Body of pancreas (tissue), 4 donors: ENCODE measurements at regions of chr16 and their contacts with region 1.

Region 1: DNA sequence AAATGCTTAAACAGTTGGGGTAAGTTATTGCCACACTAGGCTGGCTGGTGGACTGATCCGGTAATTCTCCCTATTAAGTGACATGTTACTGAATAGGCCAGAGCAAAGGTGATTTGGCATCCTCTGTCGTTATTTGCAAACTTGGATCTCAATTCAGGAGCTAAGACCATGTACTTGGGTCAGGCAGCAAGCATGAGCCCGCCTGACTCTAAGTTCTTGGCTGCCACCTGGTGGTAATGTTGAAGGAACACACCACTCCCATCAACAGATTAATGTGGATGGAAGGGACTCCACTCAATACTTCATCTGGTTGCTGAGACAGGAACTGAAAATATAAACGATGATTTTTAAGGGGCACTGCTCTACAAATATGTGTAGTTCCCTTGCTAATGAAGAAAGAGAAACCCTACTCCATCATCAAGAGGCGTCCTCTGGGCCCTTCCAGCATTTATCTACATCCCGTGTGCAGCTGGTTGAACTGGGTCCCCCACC is 70.8 kb downstream of the EMP2 start:
- DNase-seq: peak; percentile 65 to 80 (median 76)
- ATAC-seq: peak; percentile 94
- H3K4me3 ChIP-seq: no peak overlapping the region
- H3K27ac ChIP-seq: no peak overlapping the region
- H3K4me1 ChIP-seq: peaks cover 14% of the 10 kb centered on the region
- H3K27me3 ChIP-seq: no peaks in the 10 kb centered on the region
- CTCF ChIP-seq: peak; percentile 73 to 94 (median 89)
- POLR2A ChIP-seq: no peak

Region 2: GRCh38 chr16:10256784-10257641 is 252.6 kb before region 1 on chr16:
- intact Hi-C with region 1: loop called (anchors 5 kb)
- DNase-seq: peak; percentile 32 to 56 (median 50)
- ATAC-seq: peak; percentile 83
- H3K4me3 ChIP-seq: no peak overlapping the region
- H3K27ac ChIP-seq: peak overlapping the region in 1 of 4 donors; percentile 36
- H3K4me1 ChIP-seq: peaks cover 11% of the 10 kb centered on the region
- H3K27me3 ChIP-seq: no peaks in the 10 kb centered on the region
- CTCF ChIP-seq: peak; percentile 50 to 92 (median 73)
- POLR2A ChIP-seq: no peak

Region 3: DNA sequence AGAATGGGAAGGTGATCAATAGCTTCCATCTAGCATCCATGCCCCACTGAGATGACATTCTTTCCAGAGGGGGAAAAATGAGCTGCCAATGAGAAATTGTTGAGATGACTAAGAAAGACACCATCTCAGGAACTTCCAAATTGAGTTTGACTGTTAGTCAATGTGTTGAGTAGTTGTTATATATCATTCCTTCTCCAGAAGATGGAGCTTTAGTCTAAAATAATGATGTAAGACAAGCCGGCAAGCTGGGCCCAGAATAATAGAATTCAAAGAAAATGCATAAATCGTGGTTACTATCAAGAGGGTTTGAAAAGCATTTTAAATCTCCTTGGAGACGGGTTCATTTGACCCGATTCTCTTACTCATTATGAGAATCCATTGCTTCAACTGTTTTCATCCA is 194.8 kb before region 1 on chr16:
- intact Hi-C with region 1: loop called (anchors 5 kb)
- DNase-seq: no peak
- ATAC-seq: no peak
- H3K4me3 ChIP-seq: no peak overlapping the region
- H3K27ac ChIP-seq: no peak overlapping the region
- H3K4me1 ChIP-seq: peaks cover 13% of the 10 kb centered on the region
- H3K27me3 ChIP-seq: no peaks in the 10 kb centered on the region
- CTCF ChIP-seq: peak in 5 of 7 experiments; percentile 5 to 42 (median 26)
- POLR2A ChIP-seq: no peak

Region 4: DNA sequence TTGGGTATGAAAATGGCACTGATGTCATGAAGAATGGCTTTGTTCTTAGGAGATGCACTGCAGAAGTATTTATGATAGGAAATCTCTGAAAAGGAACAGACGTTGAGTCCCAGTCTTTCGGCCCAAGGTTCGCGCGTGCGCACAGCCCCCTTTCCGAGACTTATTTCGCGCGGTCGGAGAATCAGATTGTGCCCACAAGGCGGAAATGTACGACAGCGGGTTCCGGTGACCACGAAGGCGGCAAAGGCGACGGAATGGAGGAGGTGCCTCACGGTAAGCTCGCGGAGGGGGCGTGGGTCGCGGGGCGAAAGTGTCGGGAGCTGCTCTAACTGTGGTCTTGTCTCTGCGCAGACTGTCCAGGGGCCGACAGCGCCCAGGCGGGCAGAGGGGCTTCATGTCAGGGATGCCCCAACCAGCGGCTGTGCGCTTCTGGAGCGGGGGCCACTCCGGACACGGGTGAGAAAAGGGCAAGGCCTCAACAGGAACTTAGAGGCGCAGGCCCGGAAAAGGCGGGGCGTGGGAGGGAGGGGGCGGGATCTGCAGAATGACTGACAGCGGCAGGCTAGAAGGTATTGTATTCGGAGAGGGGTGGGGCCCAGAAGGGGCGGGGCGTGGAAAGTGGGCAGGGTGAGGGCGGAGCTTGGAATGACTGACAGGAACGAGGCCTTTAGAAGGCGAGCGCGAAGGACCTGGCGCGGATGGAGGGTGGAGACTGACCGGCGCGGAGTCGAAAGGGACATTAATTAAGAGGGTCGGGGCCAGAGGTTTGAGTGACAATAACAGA is 234.2 kb after region 1 on chr16 and contains the start of gene NUBP1:
- intact Hi-C with region 1: no loop called
- DNase-seq: peak; percentile 99 to 100 (median 100)
- ATAC-seq: peak; percentile 96
- H3K4me3 ChIP-seq: peak within 1 kb of the TSS; percentile 11 to 29
- H3K27ac ChIP-seq: peak within 1 kb of the TSS; percentile 93 to 99 (median 97)
- H3K4me1 ChIP-seq: peaks cover 55% of the 10 kb centered on the region
- H3K27me3 ChIP-seq: no peaks in the 10 kb centered on the region
- CTCF ChIP-seq: peak in 1 of 7 experiments; percentile 13
- POLR2A ChIP-seq: peak; percentile 78 to 94 (median 93)
- total RNA-seq, gene NUBP1: 13.8 to 31.9 TPM

Region 5: GRCh38 chr16:10918294-10919002 is 408.9 kb after region 1 on chr16:
- intact Hi-C with region 1: loop called (anchors 10 kb)
- DNase-seq: peak; percentile 96 to 97 (median 97)
- ATAC-seq: peak; percentile 94
- H3K4me3 ChIP-seq: no peak overlapping the region
- H3K27ac ChIP-seq: peak overlapping the region in 2 of 4 donors; percentile 48 to 51
- H3K4me1 ChIP-seq: peaks cover 23% of the 10 kb centered on the region
- H3K27me3 ChIP-seq: no peaks in the 10 kb centered on the region
- CTCF ChIP-seq: peak; percentile 82 to 97 (median 96)
- POLR2A ChIP-seq: peak in 1 of 3 donors; percentile 23